Mucosa of descending colon (tissue), 3 donors: ENCODE measurements at regions of chr13 and their contacts with region 1.

Region 1: DNA sequence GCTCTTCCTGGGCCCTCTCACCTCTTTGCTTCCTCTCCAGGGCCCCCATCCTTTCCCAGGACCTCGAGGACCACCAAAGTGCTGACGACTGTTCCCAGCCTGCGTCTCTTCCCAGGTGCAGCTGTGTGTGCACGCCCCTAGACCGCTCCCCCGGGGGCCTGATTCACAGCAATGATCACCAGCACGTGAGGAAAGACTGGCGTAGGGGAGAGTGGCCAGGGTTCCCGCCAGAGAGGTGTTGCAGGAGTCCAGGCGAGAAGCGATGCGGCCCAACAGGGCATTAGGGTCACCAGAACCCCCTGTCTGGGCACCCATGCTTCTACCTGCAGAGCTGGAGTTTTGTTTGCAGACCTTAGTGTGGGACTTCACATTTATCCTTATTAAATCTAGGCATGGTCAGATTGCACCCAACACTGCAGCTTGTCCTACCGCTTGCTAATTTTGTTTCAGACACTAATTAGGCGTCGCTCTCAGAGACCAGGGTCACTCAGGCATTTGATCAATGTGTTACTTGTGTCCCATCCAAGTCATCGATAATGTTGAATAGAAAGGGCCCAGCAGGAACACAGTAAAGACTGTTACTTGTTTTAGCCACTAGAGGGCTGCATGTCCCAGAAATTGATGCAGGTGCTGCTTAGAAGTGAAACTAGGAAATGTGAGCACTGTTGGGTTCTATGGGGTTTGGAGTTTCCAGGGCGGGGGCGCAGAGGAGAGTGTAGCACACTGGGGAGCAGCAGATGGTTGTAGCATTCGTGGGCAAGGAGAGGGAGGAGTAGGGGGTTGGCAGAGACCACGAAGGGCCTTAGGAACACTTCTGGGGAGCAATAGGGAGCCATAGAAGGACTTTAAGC is 53.2 kb downstream of the CDADC1 start:
- DNase-seq: peak; percentile 63 to 66 (median 63)
- ATAC-seq: peak; percentile 93
- H3K4me3 ChIP-seq: no peak overlapping the region
- H3K4me1 ChIP-seq: peaks cover 6% of the 10 kb centered on the region
- CTCF ChIP-seq: peak; percentile 47

Region 2: GRCh38 chr13:49436890-49437289 is 135.9 kb after region 1 on chr13:
- intact Hi-C with region 1: loop called (anchors 5 to 10 kb)
- DNase-seq: peak in 1 of 3 donors; percentile 17
- ATAC-seq: peak; percentile 42
- H3K4me3 ChIP-seq: no peak overlapping the region
- H3K4me1 ChIP-seq: no peaks in the 10 kb centered on the region
- CTCF ChIP-seq: no peak

Region 3: DNA sequence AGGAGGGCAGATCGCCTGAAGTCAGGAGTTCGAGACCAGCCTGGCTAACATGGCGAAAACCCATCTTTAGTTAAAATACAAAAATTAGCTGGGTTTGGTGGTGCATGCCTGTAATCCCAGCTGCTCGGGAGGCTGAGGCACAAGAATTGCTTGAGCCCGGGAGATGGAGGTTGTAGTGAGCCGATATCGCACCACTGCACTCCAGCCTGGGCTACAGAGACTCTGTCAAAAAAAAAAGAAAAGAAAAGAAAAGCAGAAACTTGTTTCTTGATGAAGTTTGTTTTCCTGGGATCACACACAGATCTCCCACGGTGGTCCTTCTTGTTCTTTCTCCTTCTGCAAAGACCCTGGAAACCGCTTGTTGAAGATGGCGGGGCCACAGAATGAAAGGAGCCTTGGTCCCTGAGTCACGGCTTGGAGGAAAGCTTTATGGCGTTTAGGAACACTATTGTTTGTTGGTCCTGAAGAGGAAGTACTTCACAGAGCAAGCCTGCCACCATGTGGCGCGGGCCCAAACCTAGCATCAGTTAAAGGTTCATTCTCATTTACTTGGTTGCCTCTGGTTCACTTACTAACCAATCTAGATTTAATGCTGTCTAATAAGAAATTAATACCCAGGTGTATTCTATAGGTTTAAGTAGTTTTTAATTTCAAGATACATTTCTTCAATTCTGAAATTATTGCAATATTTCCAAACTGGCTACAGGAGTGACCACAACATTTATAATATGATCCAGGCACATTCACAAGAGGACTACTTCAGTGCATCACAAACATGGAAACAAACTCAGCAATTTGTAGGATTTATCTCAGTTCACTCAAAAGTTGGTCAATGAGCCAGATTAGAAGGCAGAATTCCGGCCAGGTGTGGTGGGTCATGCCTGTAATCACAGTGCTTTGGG is 306.0 kb after region 1 on chr13:
- intact Hi-C with region 1: loop called (anchors 2 to 10 kb)
- DNase-seq: peak; percentile 85 to 92 (median 87)
- ATAC-seq: peak; percentile 99
- H3K4me3 ChIP-seq: no peak overlapping the region
- H3K4me1 ChIP-seq: no peaks in the 10 kb centered on the region
- CTCF ChIP-seq: peak; percentile 50